MCF 10A (cell line): ENCODE measurements at regions of chr9 and their contacts with region 1.

Region 1: DNA sequence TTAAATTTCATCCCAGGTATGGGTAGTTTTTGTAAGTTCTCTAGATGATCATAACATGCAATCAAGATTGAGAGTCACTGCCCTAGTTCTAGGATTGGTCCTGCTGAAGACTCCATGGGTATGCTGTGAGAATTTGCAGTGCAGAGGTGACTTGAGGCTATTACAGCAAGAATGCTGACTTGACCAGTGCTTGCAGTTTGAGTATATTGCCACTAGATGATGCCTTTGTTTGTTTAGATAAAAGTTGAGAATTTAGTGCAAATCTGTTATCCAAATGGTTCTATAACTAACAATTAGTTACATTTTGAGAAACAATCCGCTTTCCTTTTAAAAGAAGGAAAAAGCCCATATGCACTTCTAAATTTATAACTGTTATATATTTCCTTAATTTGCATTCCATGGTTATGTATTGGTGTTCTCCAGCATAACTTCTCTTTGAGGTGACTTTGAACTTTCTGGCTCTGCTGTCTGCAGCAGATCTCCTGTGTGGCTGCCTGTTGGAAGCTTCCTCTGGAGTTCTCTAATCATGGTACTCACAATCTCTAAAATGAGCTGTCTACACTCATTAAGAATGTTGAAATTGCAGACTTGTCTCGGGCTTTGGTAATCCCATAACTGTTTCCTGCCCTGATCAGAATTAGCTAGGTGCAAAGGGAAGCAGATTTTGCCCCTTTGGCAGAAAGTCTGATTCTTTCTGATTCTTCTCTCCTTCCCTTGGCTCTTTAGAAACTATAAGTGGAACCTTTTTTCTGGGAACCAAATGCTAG is 24.9 kb downstream of the MELK start:
- DNase-seq: peak; percentile 33
- H3K4me3 Mint-ChIP-seq: no peak overlapping the region
- H3K27ac Mint-ChIP-seq: peak overlapping the region; percentile 36
- H3K4me1 Mint-ChIP-seq: peaks cover 10% of the 10 kb centered on the region
- H3K27me3 Mint-ChIP-seq: no peaks in the 10 kb centered on the region
- CTCF ChIP-seq: peak; percentile 55

Region 2: GRCh38 chr9:36612946-36613345 is 15.4 kb after region 1 on chr9:
- CTCF ChIA-PET with region 1: interaction called, 34 read pairs
- POLR2A ChIA-PET with region 1: interaction called, 4 read pairs
- intact Hi-C with region 1: no loop called
- DNase-seq: peak; percentile 21
- H3K4me3 Mint-ChIP-seq: no peak overlapping the region
- H3K27ac Mint-ChIP-seq: peak overlapping the region; percentile 47
- H3K4me1 Mint-ChIP-seq: peaks cover 14% of the 10 kb centered on the region
- H3K27me3 Mint-ChIP-seq: no peaks in the 10 kb centered on the region
- CTCF ChIP-seq: no peak

Region 3: DNA sequence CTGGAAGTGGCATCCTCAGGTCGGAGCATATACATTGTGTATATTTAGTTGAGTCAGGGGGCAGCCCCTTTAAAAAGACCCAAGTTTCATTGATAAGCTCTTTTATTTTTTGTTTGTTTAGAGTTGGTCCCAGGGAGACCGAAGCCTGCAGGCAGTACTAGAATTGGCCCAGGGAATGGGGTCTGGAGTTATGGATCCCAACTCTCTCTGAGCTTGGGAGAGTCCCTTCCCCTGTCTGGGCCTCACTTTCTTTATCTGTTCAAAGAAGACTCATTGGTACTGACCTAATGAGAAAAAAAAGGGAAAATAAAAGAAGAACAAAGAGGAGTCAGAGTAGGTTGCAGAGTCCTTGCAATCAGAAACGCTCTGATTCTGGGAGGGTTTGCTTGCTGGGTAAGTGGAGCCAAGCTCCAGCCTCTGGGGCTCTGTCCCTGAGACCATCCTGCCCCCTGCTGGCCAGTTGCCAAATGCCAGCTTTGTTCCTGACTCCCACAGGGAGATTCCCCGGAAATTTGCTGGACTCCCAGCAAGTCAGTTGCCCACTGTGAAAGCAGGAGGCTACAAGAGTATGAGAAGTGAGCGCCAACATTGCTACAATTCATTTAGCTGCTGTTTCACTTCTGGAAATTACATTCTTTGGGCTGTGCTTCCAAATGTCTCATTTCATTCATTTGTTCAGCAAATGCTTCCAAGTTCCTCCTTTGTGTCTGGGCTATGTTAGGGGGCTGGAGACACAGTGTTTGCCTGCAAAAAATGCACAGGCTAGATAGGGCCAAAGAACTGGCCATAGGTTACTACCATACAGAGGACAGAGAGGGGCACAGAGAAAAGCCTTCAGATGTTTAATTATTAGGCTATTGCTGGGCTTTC is 131.3 kb after region 1 on chr9:
- CTCF ChIA-PET with region 1: interaction called, 8 read pairs
- POLR2A ChIA-PET with region 1: no interaction called
- intact Hi-C with region 1: loop called (anchors 5 kb)
- DNase-seq: peak; percentile 73
- H3K4me3 Mint-ChIP-seq: no peak overlapping the region
- H3K27ac Mint-ChIP-seq: no peak overlapping the region
- H3K4me1 Mint-ChIP-seq: no peaks in the 10 kb centered on the region
- H3K27me3 Mint-ChIP-seq: peaks cover 9% of the 10 kb centered on the region
- CTCF ChIP-seq: peak; percentile 71